ENCODE measurements at regions of chr1 and their contacts with region 1.

Region 1: DNA sequence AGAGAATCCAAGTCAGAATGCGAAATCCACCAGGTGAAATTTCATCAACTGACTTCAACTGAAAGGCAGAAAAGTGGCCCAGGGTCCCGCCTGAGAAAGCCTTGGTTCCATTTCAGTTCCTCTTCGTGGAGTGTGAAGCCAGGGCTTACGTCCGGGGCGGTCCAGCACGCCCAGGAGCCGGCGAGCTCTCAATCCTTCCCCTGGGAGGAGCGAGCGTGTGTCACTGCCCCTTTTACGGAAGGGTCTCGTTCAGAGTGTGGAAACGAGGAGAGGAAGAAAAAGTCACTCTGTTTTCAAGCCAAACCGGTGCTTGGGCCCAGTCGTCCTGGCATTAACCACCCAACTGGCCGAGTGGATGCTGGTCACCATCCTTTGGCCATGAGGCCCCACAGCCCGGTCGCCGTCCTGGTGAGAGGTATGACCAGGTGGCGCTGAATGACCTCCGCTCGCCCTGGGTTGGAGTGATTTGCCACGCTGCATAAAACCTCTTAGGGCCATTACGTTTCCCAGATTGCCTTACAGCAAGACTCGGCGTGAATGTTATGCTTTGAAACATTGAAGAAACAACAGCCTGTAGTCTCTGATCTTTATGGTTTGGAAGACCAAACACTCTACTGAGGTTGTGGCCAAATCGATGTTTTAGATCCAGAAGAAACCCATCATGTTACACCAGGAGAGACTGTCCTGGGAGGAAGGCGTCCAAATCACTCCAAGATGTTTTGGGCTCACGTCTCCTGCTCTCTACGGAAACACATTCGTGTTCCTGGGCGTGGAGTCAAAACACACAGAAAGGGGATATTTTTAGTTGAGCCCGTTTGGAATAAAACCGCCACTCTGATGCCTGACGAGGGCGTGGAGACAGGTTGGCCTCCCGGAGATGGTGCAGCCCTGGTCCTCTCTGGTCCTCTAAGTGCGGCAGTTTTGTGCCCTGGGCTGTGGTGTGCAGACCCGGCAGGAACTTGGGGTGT is 93.6 kb upstream of the ACTRT2 start:
- H3K4me3 Mint-ChIP-seq: no peak overlapping the region
- H3K27ac Mint-ChIP-seq: no peak overlapping the region
- H3K4me1 Mint-ChIP-seq: no peaks in the 10 kb centered on the region
- H3K27me3 Mint-ChIP-seq: no peaks in the 10 kb centered on the region

Region 2: DNA sequence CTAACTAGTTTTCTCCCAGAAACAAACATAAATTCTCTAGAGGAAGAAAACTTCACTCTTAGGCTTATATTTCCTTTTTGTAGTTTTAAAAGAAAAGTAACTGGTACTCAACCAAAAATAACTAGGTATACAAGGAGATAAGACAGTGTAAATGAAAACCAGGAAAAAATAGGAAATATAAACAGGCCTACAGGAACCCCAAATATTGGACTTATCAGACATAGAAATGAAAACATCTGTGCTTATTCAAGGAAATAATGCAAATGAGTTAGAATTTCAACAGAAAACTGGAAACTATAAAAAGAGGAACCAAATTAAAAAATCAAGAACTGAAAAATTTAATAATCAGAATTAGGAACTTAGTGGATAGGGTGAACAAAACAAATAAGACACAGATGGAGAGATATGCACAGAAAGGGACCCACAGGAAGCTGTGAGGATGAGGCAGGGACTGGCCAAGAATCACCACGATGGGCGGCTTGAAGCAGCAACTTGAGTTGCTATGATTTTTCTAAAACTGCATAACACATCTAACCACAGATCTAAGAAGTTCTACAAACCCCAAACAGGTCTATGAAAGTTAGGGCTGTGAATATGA is 26.1 kb after region 1 on chr1:
- intact Hi-C with region 1: loop called (anchors 2 kb)
- H3K4me3 Mint-ChIP-seq: no peak overlapping the region
- H3K27ac Mint-ChIP-seq: no peak overlapping the region
- H3K4me1 Mint-ChIP-seq: peaks cover 31% of the 10 kb centered on the region
- H3K27me3 Mint-ChIP-seq: peaks cover 17% of the 10 kb centered on the region